CD8-positive, alpha-beta T cell (primary cell): ENCODE measurements at regions of chr6 and their contacts with region 1.

Region 1: DNA sequence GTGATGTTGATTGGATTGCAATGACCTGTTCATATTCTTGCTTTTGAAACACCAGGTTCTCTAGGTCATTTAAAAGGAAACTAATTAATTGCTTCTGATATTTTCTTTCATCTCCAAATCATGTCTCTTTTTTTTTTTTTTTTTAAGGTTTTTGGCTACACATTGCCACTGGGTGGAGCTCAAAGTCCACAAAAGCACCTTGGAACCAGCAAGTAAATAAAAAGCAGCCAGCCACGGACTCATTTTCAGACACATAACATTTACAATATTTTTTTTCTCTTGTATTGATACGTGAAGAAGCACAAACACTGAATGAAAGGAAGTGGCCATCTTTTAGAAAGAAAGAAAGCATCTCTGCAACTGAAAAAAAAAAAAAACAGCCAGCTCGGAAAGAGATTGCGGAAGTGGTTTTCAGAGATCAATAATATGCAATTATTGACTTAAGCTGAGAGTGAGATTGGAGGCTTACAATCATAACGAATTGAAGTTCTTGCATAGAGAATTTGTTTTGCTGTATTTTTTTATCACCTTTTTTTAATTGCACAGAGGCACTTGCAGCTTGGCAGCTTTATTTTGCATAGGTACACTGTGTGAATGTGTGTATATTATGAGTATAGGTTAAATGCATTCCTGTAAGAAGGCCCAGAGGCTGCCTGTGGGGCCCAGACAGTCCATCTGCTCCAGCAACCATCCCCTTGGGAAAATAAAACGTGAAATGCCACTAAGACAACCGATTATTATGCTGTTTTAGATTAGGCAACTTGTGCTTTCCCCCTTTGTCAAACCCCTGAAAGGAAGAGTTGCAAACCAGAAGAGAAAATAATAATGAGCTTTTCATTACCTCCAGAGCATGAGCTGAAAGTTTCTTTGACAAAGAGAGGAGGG is 28.2 kb downstream of the CGA start:
- DNase-seq: peak in 3 of 9 experiments; percentile 20 to 62 (median 54)
- ATAC-seq: no peak
- H3K4me3 ChIP-seq: no peak overlapping the region
- H3K4me3 Mint-ChIP-seq: no peak overlapping the region
- H3K27ac ChIP-seq: no peak overlapping the region
- H3K27ac Mint-ChIP-seq: no peak overlapping the region
- H3K4me1 ChIP-seq: no peaks in the 10 kb centered on the region
- H3K4me1 Mint-ChIP-seq: no peaks in the 10 kb centered on the region
- H3K27me3 ChIP-seq: no peaks in the 10 kb centered on the region
- H3K27me3 Mint-ChIP-seq: peaks cover 5% of the 10 kb centered on the region
- CTCF ChIP-seq: peak; percentile 46

Region 2: GRCh38 chr6:85273870-85274269 is 1792.8 kb before region 1 on chr6:
- CTCF ChIA-PET with region 1: no interaction called
- POLR2A ChIA-PET with region 1: no interaction called
- intact Hi-C with region 1: no loop called
- DNase-seq: no peak
- ATAC-seq: no peak
- H3K4me3 ChIP-seq: no peak overlapping the region
- H3K4me3 Mint-ChIP-seq: no peak overlapping the region
- H3K27ac ChIP-seq: no peak overlapping the region
- H3K27ac Mint-ChIP-seq: no peak overlapping the region
- H3K4me1 ChIP-seq: no peaks in the 10 kb centered on the region
- H3K4me1 Mint-ChIP-seq: no peaks in the 10 kb centered on the region
- H3K27me3 ChIP-seq: no peaks in the 10 kb centered on the region
- H3K27me3 Mint-ChIP-seq: peaks cover 5% of the 10 kb centered on the region
- CTCF ChIP-seq: no peak

Region 3: DNA sequence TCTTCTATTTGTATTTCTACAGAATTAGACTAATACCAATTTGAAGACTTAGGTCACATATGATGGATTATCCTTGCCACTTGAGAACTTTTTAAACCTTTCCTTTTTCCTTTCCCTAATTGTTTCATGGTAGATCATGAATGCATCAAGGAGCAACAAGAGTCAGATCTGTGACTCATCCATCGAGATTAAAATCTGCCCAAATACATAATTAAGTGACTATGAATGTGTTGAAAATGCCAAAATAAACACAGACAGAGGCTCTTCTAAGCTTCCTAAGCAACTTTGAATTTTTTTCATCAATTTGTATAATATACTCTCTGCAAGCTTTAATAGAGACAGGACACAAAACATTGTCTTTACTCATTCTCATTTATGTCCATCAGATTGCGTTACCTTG is 152.9 kb before region 1 on chr6:
- CTCF ChIA-PET with region 1: no interaction called
- POLR2A ChIA-PET with region 1: no interaction called
- intact Hi-C with region 1: no loop called
- DNase-seq: no peak
- ATAC-seq: no peak
- H3K4me3 ChIP-seq: no peak overlapping the region
- H3K4me3 Mint-ChIP-seq: no peak overlapping the region
- H3K27ac ChIP-seq: no peak overlapping the region
- H3K27ac Mint-ChIP-seq: no peak overlapping the region
- H3K4me1 ChIP-seq: no peaks in the 10 kb centered on the region
- H3K4me1 Mint-ChIP-seq: no peaks in the 10 kb centered on the region
- H3K27me3 ChIP-seq: no peaks in the 10 kb centered on the region
- H3K27me3 Mint-ChIP-seq: no peaks in the 10 kb centered on the region
- CTCF ChIP-seq: no peak

Region 4: GRCh38 chr6:87078983-87079616 is 12.4 kb after region 1 on chr6:
- CTCF ChIA-PET with region 1: interaction called, 30 read pairs
- POLR2A ChIA-PET with region 1: no interaction called
- intact Hi-C with region 1: no loop called
- DNase-seq: peak; percentile 4 to 62 (median 51)
- ATAC-seq: peak; percentile 73
- H3K4me3 ChIP-seq: no peak overlapping the region
- H3K4me3 Mint-ChIP-seq: no peak overlapping the region
- H3K27ac ChIP-seq: no peak overlapping the region
- H3K27ac Mint-ChIP-seq: no peak overlapping the region
- H3K4me1 ChIP-seq: no peaks in the 10 kb centered on the region
- H3K4me1 Mint-ChIP-seq: no peaks in the 10 kb centered on the region
- H3K27me3 ChIP-seq: no peaks in the 10 kb centered on the region
- H3K27me3 Mint-ChIP-seq: peaks cover 4% of the 10 kb centered on the region
- CTCF ChIP-seq: peak; percentile 76

Region 5: DNA sequence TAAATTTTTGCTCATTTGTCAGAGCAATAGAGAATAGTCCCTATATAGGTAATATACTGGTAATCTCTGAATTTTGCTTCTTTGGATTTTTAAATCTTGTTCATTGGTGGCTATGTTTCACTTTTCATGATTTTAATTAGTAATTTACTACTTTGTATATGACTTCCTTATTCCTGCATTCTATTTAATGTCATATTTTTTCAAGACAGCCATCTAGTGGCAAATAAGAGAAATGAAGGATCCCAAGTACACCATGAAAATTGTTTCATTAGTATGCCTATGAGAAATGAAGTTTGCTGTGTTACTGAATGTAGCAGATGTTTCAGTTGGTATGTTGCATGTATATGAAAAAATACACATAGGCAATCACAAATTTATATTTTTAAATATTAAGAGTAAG is 171.1 kb after region 1 on chr6:
- CTCF ChIA-PET with region 1: no interaction called
- POLR2A ChIA-PET with region 1: no interaction called
- intact Hi-C with region 1: loop called in 1 of 2 experiments (anchors 10 kb)
- DNase-seq: peak in 2 of 9 experiments; percentile 25 to 52
- ATAC-seq: peak; percentile 66
- H3K4me3 ChIP-seq: no peak overlapping the region
- H3K4me3 Mint-ChIP-seq: no peak overlapping the region
- H3K27ac ChIP-seq: no peak overlapping the region
- H3K27ac Mint-ChIP-seq: no peak overlapping the region
- H3K4me1 ChIP-seq: no peaks in the 10 kb centered on the region
- H3K4me1 Mint-ChIP-seq: peaks cover 7% of the 10 kb centered on the region
- H3K27me3 ChIP-seq: no peaks in the 10 kb centered on the region
- H3K27me3 Mint-ChIP-seq: no peaks in the 10 kb centered on the region
- CTCF ChIP-seq: peak; percentile 75

Region 6: GRCh38 chr6:87671555-87672029 is 604.9 kb after region 1 on chr6:
- CTCF ChIA-PET with region 1: no interaction called
- POLR2A ChIA-PET with region 1: no interaction called
- intact Hi-C with region 1: no loop called
- DNase-seq: no peak
- ATAC-seq: no peak
- H3K4me3 ChIP-seq: no peak overlapping the region
- H3K4me3 Mint-ChIP-seq: no peak overlapping the region
- H3K27ac ChIP-seq: peak overlapping the region in 1 of 2 experiments; percentile 51
- H3K27ac Mint-ChIP-seq: peak overlapping the region; percentile 63
- H3K4me1 ChIP-seq: peaks cover 5% of the 10 kb centered on the region
- H3K4me1 Mint-ChIP-seq: peaks cover 17% of the 10 kb centered on the region
- H3K27me3 ChIP-seq: no peaks in the 10 kb centered on the region
- H3K27me3 Mint-ChIP-seq: no peaks in the 10 kb centered on the region
- CTCF ChIP-seq: no peak